ENCODE measurements at regions of chr10 and their contacts with region 1.

Region 1: GRCh38 chr10:89563861-89564478 is 28.6 kb upstream of the SLC16A12 start:
- DNase-seq: peak; percentile 3
- ATAC-seq: peak; percentile 82
- H3K4me3 ChIP-seq: no peak overlapping the region
- H3K27ac ChIP-seq: no peak overlapping the region
- H3K4me1 ChIP-seq: no peaks in the 10 kb centered on the region
- H3K27me3 ChIP-seq: no peaks in the 10 kb centered on the region
- CTCF ChIP-seq: peak; percentile 51 to 57 (median 57)
- EP300 ChIP-seq: no peak
- POLR2A ChIP-seq: no peak
- RAD21 ChIP-seq: peak; percentile 87

Region 2: GRCh38 chr10:89419548-89419947 is 144.4 kb before region 1 on chr10:
- CTCF ChIA-PET with region 1: interaction called, 4 read pairs
- POLR2A ChIA-PET with region 1: no interaction called
- RAD21 ChIA-PET with region 1: interaction called, 3 read pairs
- SMC1A ChIA-PET with region 1: interaction called, 17 read pairs
- in situ Hi-C with region 1: loop called (anchors 10 kb)
- intact Hi-C with region 1: no loop called
- DNase-seq: no peak
- ATAC-seq: no peak
- H3K4me3 ChIP-seq: peak overlapping the region; percentile 61
- H3K27ac ChIP-seq: no peak overlapping the region
- H3K4me1 ChIP-seq: no peaks in the 10 kb centered on the region
- H3K27me3 ChIP-seq: no peaks in the 10 kb centered on the region
- CTCF ChIP-seq: peak; percentile 47 to 57 (median 49)
- EP300 ChIP-seq: no peak
- POLR2A ChIP-seq: no peak
- RAD21 ChIP-seq: peak; percentile 27; the same call in 1 of the 2 replicates

Region 3: GRCh38 chr10:89426230-89426868 is 137.6 kb before region 1 on chr10:
- CTCF ChIA-PET with region 1: interaction called, 10 read pairs
- POLR2A ChIA-PET with region 1: no interaction called
- RAD21 ChIA-PET with region 1: interaction called, 9 read pairs
- SMC1A ChIA-PET with region 1: interaction called, 6 read pairs
- in situ Hi-C with region 1: loop called (anchors 10 kb)
- intact Hi-C with region 1: loop called (anchors 1 kb)
- DNase-seq: no peak
- ATAC-seq: peak; percentile 87
- H3K4me3 ChIP-seq: no peak overlapping the region
- H3K27ac ChIP-seq: no peak overlapping the region
- H3K4me1 ChIP-seq: no peaks in the 10 kb centered on the region
- H3K27me3 ChIP-seq: no peaks in the 10 kb centered on the region
- CTCF ChIP-seq: peak; percentile 66 to 85 (median 79); a peak in 4 of 6 replicates
- EP300 ChIP-seq: no peak
- POLR2A ChIP-seq: no peak
- RAD21 ChIP-seq: peak; percentile 86